ENCODE measurements at regions of chr17 and their contacts with region 1.

Region 1: DNA sequence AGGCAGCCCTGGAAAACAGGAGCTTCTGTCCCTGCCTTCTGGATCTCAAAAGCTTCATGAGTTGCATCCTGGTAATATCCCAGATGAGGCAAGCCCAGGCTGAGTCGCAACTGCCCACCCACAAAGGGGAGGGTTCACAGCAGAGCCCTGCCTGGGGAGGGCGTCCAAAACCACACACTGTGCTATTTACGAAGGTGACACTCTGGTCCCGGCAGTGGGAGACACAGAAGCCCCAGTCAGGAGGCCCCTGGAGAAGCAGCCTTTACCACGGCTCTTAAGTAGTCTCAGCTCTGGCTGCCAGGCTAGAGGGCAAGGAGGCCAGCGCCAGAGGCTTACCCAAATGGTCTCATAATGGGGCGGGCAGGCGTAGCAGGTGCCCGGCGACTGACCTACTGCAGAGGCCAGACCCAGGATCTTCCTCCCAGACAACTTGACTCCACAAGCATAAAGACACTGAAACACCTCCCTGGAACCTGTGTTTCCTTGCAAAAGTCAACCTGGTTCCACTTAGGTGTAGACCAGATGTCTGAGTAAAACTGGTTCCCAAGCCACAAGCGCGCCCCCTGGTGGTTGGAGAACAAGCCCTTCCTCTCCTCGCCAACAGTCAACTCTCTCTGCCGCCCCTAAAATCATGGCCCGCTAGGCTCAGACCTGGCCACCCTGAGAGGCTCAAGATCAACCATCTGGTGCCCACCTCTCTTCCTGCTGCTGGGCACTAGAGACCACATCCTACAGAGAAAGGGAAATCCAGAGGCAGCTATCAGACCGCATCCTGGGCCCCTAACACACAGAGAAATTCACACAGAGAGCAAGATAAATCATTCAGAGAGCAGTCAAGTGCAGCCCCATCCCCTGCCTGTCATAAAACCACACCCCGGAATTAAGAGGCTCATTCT is 5.2 kb downstream of the AXIN2 start:
- DNase-seq: peak; percentile 75
- H3K4me3 ChIP-seq: no peak overlapping the region
- H3K27ac ChIP-seq: no peak overlapping the region
- H3K4me1 ChIP-seq: no peaks in the 10 kb centered on the region
- H3K27me3 ChIP-seq: no peaks in the 10 kb centered on the region
- CTCF ChIP-seq: peak; percentile 76

Region 2: GRCh38 chr17:65455972-65456343 is 100.3 kb before region 1 on chr17:
- intact Hi-C with region 1: loop called (anchors 5 kb)
- DNase-seq: no peak
- H3K4me3 ChIP-seq: peak overlapping the region; percentile 37
- H3K27ac ChIP-seq: peak overlapping the region; percentile 84
- H3K4me1 ChIP-seq: peaks cover 21% of the 10 kb centered on the region
- H3K27me3 ChIP-seq: no peaks in the 10 kb centered on the region
- CTCF ChIP-seq: peak; percentile 60